ENCODE measurements at regions of chr1 and their contacts with region 1.

Region 1: DNA sequence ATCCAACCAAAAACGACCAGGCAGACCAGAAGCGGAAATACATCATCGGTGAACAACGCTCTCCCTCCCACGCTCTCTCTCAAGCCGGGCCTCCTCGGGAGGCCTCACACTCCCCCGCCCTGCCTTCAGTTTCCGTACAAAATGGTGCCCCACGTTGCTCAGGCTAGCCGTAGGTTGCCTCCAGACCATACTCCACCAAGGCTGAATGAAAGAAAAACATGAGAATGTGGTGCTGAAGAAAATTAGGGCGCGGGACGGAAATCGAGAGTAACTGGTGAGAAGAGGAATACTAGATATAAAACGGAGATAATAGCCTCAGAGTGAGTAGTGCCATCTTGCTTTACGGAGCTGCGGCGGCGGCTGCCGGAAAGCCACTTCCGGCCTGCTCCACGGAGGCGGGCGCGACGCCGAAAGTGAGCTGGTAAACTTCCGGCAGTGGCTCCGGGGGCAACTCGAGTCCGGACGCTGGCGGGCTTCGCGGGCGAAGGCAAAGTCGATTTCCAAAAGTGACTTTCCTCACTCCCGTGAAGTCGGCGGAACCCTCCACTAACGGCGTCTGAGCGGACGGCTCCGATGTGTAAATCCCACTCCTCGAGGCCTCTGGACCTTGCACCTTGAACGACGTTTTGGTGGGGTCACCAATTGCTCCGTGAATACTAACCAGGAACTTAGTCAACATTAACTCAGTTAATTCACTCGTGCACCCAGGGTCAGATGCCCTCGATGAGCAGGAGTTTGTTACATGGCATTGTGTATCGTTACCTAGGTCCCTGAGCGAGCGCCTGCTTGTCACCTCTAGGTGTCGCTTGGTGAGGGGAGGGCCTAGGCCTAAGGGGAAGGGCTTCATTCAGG is at the start of gene SH3BP5L:
- DNase-seq: peak; percentile 88
- H3K4me3 Mint-ChIP-seq: peak within 1 kb of the TSS; percentile 92
- H3K27ac Mint-ChIP-seq: peak within 1 kb of the TSS; percentile 99
- H3K4me1 Mint-ChIP-seq: peaks cover 37% of the 10 kb centered on the region
- H3K27me3 Mint-ChIP-seq: no peaks in the 10 kb centered on the region
- total RNA-seq, gene SH3BP5L: 27.1 TPM in 2 replicates

Region 2: GRCh38 chr1:248613742-248614141 is 212.4 kb before region 1 on chr1:
- intact Hi-C with region 1: loop called (anchors 1 kb)
- DNase-seq: no peak
- H3K4me3 Mint-ChIP-seq: no peak overlapping the region
- H3K27ac Mint-ChIP-seq: peak overlapping the region; percentile 82
- H3K4me1 Mint-ChIP-seq: peaks cover 36% of the 10 kb centered on the region
- H3K27me3 Mint-ChIP-seq: no peaks in the 10 kb centered on the region

Region 3: DNA sequence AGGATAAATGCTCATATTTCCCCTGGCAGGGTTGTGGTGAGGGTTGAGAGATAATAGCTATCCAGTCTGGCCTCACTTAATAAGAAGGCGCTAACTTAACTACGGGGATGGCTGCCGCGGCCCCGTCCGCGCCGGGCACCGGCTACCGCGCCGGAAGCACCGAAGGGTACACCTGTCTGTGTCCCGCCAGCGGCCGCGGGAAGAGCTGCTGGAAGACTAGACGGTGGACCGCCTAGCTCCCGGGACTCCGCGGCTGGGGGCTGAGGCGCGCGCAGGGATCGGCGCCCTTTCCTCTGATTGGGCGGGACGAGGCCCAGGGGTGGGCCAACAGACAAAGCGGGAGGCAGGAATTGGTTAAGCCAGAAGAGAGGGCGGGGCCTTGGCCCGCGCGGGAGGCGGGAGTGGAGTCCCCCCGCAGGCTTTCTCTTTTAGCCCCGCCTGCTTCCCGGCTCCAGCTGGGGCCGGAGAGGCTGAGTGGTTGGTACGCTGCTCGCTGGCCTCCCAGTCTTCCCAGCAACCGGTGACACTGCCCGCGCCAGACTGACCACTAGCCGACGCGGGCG is 11.7 kb after region 1 on chr1 and contains the start of gene ZNF672:
- intact Hi-C with region 1: loop called (anchors 1 kb)
- DNase-seq: peak; percentile 93
- H3K4me3 Mint-ChIP-seq: no peak within 1 kb of the TSS
- H3K27ac Mint-ChIP-seq: peak within 1 kb of the TSS; percentile 90
- H3K4me1 Mint-ChIP-seq: peaks cover 21% of the 10 kb centered on the region
- H3K27me3 Mint-ChIP-seq: peaks cover 2% of the 10 kb centered on the region
- total RNA-seq, gene ZNF672: 46.0 and 51.6 TPM in 2 replicates

Region 4: GRCh38 chr1:248858891-248859889 is 33.1 kb after region 1 on chr1 and contains the start of gene ZNF692:
- intact Hi-C with region 1: loop called (anchors 1 kb)
- DNase-seq: peak; percentile 96
- H3K4me3 Mint-ChIP-seq: peak within 1 kb of the TSS; percentile 93
- H3K27ac Mint-ChIP-seq: peak within 1 kb of the TSS; percentile 96
- H3K4me1 Mint-ChIP-seq: peaks cover 40% of the 10 kb centered on the region
- H3K27me3 Mint-ChIP-seq: no peaks in the 10 kb centered on the region
- total RNA-seq, gene ZNF692: 86.4 and 87.0 TPM in 2 replicates

Region 5: DNA sequence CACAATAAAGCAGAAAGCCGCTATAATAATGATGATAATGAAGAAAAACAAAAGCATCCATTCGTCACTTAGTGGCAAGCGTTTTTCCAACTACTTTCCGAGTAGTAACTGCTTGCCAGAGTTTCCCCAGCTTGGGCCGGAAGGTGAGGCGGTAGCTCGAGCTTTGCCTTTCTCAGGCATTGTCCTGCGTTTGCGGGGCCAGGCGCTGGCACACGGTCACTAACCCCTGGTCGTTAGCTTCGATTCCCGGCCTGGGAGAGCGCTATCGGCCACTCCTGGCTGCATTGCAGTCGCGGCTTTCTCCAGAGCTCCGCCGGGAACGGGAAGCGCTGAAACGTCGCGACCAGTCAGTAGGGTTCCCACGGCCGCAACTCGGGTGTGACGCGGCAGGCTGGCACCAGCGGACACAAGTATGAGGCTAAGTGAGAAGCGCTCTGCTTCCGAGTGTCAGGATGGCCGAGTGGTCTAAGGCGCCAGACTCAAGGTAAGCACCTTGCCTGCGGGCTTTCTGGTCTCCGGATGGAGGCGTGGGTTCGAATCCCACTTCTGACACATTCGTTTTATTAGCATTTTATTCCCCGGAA is 47.4 kb after region 1 on chr1:
- intact Hi-C with region 1: loop called (anchors 1 kb)
- DNase-seq: peak; percentile 91
- H3K4me3 Mint-ChIP-seq: peak overlapping the region; percentile 87
- H3K27ac Mint-ChIP-seq: peak overlapping the region; percentile 96
- H3K4me1 Mint-ChIP-seq: peaks cover 22% of the 10 kb centered on the region
- H3K27me3 Mint-ChIP-seq: peaks cover 17% of the 10 kb centered on the region